CD8-positive, alpha-beta T cell (primary cell): ENCODE measurements at regions of chr6 and their contacts with region 1.

Region 1: GRCh38 chr6:2127484-2127911 is 117.9 kb downstream of the GMDS start:
- DNase-seq: peak in 5 of 9 experiments; percentile 24 to 48 (median 30)
- ATAC-seq: peak; percentile 75
- H3K4me3 ChIP-seq: no peak overlapping the region
- H3K4me3 Mint-ChIP-seq: no peak overlapping the region
- H3K27ac ChIP-seq: peak overlapping the region in 1 of 2 experiments; percentile 51
- H3K27ac Mint-ChIP-seq: peak overlapping the region; percentile 37
- H3K4me1 ChIP-seq: no peaks in the 10 kb centered on the region
- H3K4me1 Mint-ChIP-seq: peaks cover 27% of the 10 kb centered on the region
- H3K27me3 ChIP-seq: no peaks in the 10 kb centered on the region
- H3K27me3 Mint-ChIP-seq: no peaks in the 10 kb centered on the region
- CTCF ChIP-seq: no peak

Region 2: DNA sequence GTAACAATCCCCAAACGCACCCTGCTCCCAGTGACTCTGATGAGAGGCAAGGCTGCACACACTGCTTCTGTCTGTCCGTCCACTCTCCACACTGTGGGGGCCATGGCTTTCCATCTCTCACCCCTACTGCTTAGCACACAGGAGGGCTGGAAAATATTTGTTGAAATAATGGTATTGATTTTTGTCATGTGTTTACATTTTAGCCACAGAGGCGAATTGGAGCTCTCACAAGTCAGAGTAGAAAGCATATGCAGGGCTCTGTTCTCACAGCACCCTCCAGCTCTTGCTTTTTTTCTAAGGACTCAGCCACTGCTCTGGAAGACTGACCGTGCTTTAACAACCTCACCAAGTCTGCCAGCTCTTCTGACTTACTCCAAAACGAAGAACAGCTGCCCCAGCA is 155.9 kb before region 1 on chr6:
- CTCF ChIA-PET with region 1: no interaction called
- POLR2A ChIA-PET with region 1: no interaction called
- intact Hi-C with region 1: no loop called
- DNase-seq: no peak
- ATAC-seq: no peak
- H3K4me3 ChIP-seq: no peak overlapping the region
- H3K4me3 Mint-ChIP-seq: no peak overlapping the region
- H3K27ac ChIP-seq: no peak overlapping the region
- H3K27ac Mint-ChIP-seq: no peak overlapping the region
- H3K4me1 ChIP-seq: no peaks in the 10 kb centered on the region
- H3K4me1 Mint-ChIP-seq: peaks cover 8% of the 10 kb centered on the region
- H3K27me3 ChIP-seq: no peaks in the 10 kb centered on the region
- H3K27me3 Mint-ChIP-seq: no peaks in the 10 kb centered on the region
- CTCF ChIP-seq: no peak

Region 3: DNA sequence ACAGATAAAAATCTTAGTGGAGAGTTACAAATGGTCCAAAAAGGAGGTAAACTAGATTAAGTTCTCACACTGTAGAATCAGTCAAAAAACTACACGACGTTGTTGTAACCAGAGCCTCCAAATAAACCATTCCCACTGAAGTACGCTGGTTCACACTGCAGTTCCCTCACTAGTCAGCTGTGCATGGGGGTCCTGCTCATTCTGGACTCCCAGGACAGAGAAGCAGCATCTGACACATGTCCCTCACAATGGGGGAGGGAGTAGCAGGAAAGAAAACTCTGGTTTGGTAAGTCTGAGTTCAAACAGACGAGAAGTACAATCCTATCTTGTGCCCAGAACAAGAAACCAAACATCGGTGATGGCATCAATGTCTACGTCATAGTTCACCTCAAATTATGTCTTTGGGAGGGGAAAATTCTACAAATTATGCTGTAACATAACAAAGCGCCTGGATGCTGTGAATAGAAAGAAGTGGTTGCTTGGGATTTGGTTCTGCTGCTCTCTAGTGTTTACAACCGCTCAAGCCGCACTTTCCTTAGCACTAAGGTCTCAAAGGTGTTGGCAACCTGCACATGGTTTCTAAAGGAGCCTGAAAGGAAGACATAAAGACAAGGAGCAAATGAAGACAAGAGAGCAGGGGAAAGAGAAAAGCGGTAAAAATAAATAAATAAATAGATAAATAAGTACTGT is 90.1 kb before region 1 on chr6:
- CTCF ChIA-PET with region 1: no interaction called
- POLR2A ChIA-PET with region 1: no interaction called
- intact Hi-C with region 1: no loop called
- DNase-seq: peak in 2 of 9 experiments; percentile 10 to 21
- ATAC-seq: peak; percentile 26
- H3K4me3 ChIP-seq: no peak overlapping the region
- H3K4me3 Mint-ChIP-seq: peak overlapping the region; percentile 42
- H3K27ac ChIP-seq: no peak overlapping the region
- H3K27ac Mint-ChIP-seq: no peak overlapping the region
- H3K4me1 ChIP-seq: peaks cover 19% of the 10 kb centered on the region
- H3K4me1 Mint-ChIP-seq: peaks cover 32% of the 10 kb centered on the region
- H3K27me3 ChIP-seq: no peaks in the 10 kb centered on the region
- H3K27me3 Mint-ChIP-seq: no peaks in the 10 kb centered on the region
- CTCF ChIP-seq: no peak

Region 4: GRCh38 chr6:2078888-2079287 is 48.6 kb before region 1 on chr6:
- CTCF ChIA-PET with region 1: no interaction called
- POLR2A ChIA-PET with region 1: no interaction called
- intact Hi-C with region 1: no loop called
- DNase-seq: no peak
- ATAC-seq: no peak
- H3K4me3 ChIP-seq: no peak overlapping the region
- H3K4me3 Mint-ChIP-seq: no peak overlapping the region
- H3K27ac ChIP-seq: no peak overlapping the region
- H3K27ac Mint-ChIP-seq: no peak overlapping the region
- H3K4me1 ChIP-seq: peaks cover 23% of the 10 kb centered on the region
- H3K4me1 Mint-ChIP-seq: peaks cover 28% of the 10 kb centered on the region
- H3K27me3 ChIP-seq: no peaks in the 10 kb centered on the region
- H3K27me3 Mint-ChIP-seq: no peaks in the 10 kb centered on the region
- CTCF ChIP-seq: no peak

Region 5: GRCh38 chr6:2147766-2148448 is 20.4 kb after region 1 on chr6:
- CTCF ChIA-PET with region 1: no interaction called
- POLR2A ChIA-PET with region 1: no interaction called
- intact Hi-C with region 1: loop called in 1 of 2 experiments (anchors 1 kb)
- DNase-seq: no peak
- ATAC-seq: no peak
- H3K4me3 ChIP-seq: no peak overlapping the region
- H3K4me3 Mint-ChIP-seq: no peak overlapping the region
- H3K27ac ChIP-seq: no peak overlapping the region
- H3K27ac Mint-ChIP-seq: no peak overlapping the region
- H3K4me1 ChIP-seq: no peaks in the 10 kb centered on the region
- H3K4me1 Mint-ChIP-seq: peaks cover 7% of the 10 kb centered on the region
- H3K27me3 ChIP-seq: no peaks in the 10 kb centered on the region
- H3K27me3 Mint-ChIP-seq: no peaks in the 10 kb centered on the region
- CTCF ChIP-seq: no peak